Breast epithelium (tissue), 4 donors: ENCODE measurements at regions of chr2 and their contacts with region 1.

Region 1: GRCh38 chr2:71609958-71610357 is 156.6 kb downstream of the DYSF start:
- DNase-seq: no peak
- H3K4me3 ChIP-seq: no peak overlapping the region
- H3K27ac ChIP-seq: no peak overlapping the region
- H3K4me1 ChIP-seq: no peaks in the 10 kb centered on the region
- H3K27me3 ChIP-seq: no peaks in the 10 kb centered on the region
- CTCF ChIP-seq: peak in 1 of 3 donors; percentile 17
- POLR2A ChIP-seq: no peak

Region 2: GRCh38 chr2:72153081-72153791 is 543.3 kb after region 1 on chr2:
- intact Hi-C with region 1: no loop called
- DNase-seq: peak in 1 of 2 donors; percentile 7
- H3K4me3 ChIP-seq: no peak overlapping the region
- H3K27ac ChIP-seq: no peak overlapping the region
- H3K4me1 ChIP-seq: peaks cover 9 to 12% of the 10 kb centered on the region in 2 donors
- H3K27me3 ChIP-seq: peaks cover 3 to 48% of the 10 kb centered on the region in 2 donors
- CTCF ChIP-seq: no peak
- POLR2A ChIP-seq: no peak

Region 3: DNA sequence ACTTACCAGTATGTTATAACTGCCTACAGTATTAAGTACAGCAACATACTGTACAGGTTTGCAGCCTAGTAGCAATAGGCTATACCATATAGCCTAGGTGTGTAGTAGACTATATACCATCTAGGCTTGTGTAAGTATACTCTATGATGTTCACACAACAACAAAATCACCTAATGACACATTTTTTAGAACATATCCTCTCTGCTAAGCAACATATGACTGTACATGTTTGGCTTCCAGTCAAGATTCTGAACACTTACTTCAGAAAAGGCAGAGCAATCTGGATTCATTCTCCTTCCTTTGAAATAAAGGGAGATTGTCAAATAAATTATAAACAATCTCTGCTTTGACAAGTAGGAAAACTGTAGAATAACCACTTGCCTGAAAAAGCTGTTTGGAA is 1134.1 kb after region 1 on chr2:
- intact Hi-C with region 1: loop called (anchors 5 kb)
- DNase-seq: no peak
- H3K4me3 ChIP-seq: no peak overlapping the region
- H3K27ac ChIP-seq: no peak overlapping the region
- H3K4me1 ChIP-seq: no peaks in the 10 kb centered on the region
- H3K27me3 ChIP-seq: no peaks in the 10 kb centered on the region
- CTCF ChIP-seq: no peak
- POLR2A ChIP-seq: no peak